Endothelial cell of umbilical vein (primary cell): ENCODE measurements at regions of chr9 and their contacts with region 1.

Region 1: GRCh38 chr9:31612336-31613030 is 772.0 kb upstream of the ACO1 start:
- DNase-seq: peak; percentile 86
- H3K4me3 ChIP-seq: peak overlapping the region in 1 of 3 experiments; percentile 2
- H3K27ac ChIP-seq: peak overlapping the region; percentile 84
- H3K4me1 ChIP-seq: peaks cover 35% of the 10 kb centered on the region
- H3K27me3 ChIP-seq: no peaks in the 10 kb centered on the region
- CTCF ChIP-seq: no peak
- POLR2A ChIP-seq: no peak

Region 2: DNA sequence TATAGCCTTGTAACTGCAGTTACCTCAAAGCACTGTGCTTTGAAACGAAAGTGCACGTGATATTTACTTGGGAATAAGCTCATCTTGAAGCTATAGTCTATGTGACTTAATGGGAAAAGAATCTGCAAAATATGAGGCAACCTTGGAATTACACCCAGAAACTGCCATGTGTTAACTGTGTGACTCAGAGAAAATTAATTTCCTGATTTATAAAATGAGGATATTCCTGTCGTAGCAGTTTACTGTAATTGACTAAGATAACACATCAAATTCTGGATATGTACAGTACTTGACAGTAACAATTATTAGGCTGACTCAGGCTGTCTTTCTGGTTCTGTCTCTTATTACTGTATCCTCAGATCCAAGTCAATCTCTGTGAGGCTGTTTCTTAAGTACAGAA is 307.9 kb before region 1 on chr9:
- CTCF ChIA-PET with region 1: interaction called, 5 read pairs
- POLR2A ChIA-PET with region 1: no interaction called
- dilution Hi-C with region 1: no loop called
- intact Hi-C with region 1: loop called (anchors 1 kb)
- DNase-seq: peak; percentile 95
- H3K4me3 ChIP-seq: no peak overlapping the region
- H3K27ac ChIP-seq: peak overlapping the region; percentile 83
- H3K4me1 ChIP-seq: peaks cover 25% of the 10 kb centered on the region
- H3K27me3 ChIP-seq: no peaks in the 10 kb centered on the region
- CTCF ChIP-seq: no peak
- POLR2A ChIP-seq: peak; percentile 39

Region 3: DNA sequence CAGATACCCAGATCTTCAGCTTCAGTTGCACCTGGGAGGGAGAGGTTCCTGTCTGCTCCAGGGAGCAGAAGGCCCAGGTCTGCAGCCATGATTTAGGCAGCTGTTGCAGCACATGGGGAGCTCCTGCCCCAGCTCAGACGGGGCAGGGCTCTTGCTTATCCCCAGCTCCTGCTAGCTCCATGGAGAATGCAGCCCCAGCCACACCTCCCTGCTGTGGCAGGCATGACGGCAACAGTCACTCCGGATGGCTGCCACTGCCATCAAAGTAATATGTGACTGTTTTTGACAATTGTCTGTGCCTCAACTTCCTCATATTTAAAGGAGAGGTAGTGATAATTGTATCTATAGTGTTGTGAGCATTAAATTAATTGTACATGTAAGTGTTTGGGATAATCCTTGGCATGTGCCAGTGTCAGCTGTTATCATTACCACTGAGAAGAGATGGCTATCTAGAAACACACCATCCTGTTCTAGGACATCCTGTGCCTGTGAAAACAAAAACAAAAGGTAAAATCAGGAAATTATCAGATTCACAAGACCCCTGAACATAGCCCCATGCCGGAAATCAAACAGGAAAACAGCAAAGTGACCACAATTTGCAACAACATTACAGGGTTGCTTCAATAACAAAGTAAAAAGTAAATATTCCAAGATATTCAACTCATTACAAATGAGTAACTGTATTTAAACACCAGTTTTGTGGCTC is 276.8 kb before region 1 on chr9:
- CTCF ChIA-PET with region 1: no interaction called
- POLR2A ChIA-PET with region 1: no interaction called
- dilution Hi-C with region 1: no loop called
- intact Hi-C with region 1: loop called (anchors 1 kb)
- DNase-seq: peak; percentile 75
- H3K4me3 ChIP-seq: no peak overlapping the region
- H3K27ac ChIP-seq: peak overlapping the region; percentile 41
- H3K4me1 ChIP-seq: peaks cover 20% of the 10 kb centered on the region
- H3K27me3 ChIP-seq: no peaks in the 10 kb centered on the region
- CTCF ChIP-seq: no peak
- POLR2A ChIP-seq: no peak

Region 4: GRCh38 chr9:31394015-31394473 is 218.4 kb before region 1 on chr9:
- CTCF ChIA-PET with region 1: no interaction called
- POLR2A ChIA-PET with region 1: no interaction called
- dilution Hi-C with region 1: no loop called
- intact Hi-C with region 1: loop called (anchors 10 kb)
- DNase-seq: peak; percentile 63
- H3K4me3 ChIP-seq: no peak overlapping the region
- H3K27ac ChIP-seq: no peak overlapping the region
- H3K4me1 ChIP-seq: no peaks in the 10 kb centered on the region
- H3K27me3 ChIP-seq: no peaks in the 10 kb centered on the region
- CTCF ChIP-seq: no peak
- POLR2A ChIP-seq: no peak

Region 5: GRCh38 chr9:31623511-31623910 is 11.0 kb after region 1 on chr9:
- CTCF ChIA-PET with region 1: interaction called, 4 read pairs
- POLR2A ChIA-PET with region 1: no interaction called
- dilution Hi-C with region 1: no loop called
- intact Hi-C with region 1: loop called (anchors 2 kb)
- DNase-seq: no peak
- H3K4me3 ChIP-seq: no peak overlapping the region
- H3K27ac ChIP-seq: no peak overlapping the region
- H3K4me1 ChIP-seq: no peaks in the 10 kb centered on the region
- H3K27me3 ChIP-seq: no peaks in the 10 kb centered on the region
- CTCF ChIP-seq: no peak
- POLR2A ChIP-seq: no peak